ENCODE measurements at regions of chr17 and their contacts with region 1.

Region 1: DNA sequence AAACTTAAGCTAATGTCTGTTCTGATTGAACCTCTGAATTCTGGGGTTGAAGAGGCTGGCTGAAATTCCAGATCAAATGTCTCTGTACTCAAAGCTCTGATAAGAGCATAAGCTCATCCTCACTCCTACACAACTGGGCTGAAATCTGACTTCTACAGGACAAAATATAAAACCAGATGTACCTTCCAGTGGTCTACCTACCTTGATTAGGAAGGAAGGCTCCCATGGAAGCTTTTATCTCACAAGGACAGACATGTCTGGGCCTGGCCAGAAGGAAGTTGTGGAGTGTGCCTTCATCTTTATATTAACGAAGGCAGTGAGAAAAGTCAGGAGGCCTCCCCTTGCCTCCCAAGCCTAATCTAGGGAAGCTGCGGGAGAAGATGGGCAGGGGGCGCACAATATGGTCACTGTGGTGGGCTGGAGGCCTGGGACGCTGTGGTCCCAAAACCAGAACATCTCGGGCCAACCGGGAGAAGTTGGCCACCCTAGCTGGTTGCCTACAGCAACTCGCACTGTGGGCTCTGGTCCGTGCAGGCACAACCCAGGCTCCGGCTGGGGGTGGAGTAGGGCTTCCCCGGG is 55.6 kb upstream of the LRRC37A3 start:
- DNase-seq: no peak

Region 2: GRCh38 chr17:65198653-65199382 is 224.0 kb after region 1 on chr17:
- in situ Hi-C with region 1: loop called (anchors 25 kb)
- DNase-seq: peak; percentile 84